ENCODE measurements at regions of chr10 and their contacts with region 1.

Region 1: GRCh38 chr10:86678999-86679792 is 10.9 kb downstream of the LDB3 start:
- DNase-seq: no peak
- ATAC-seq: no peak
- H3K4me3 ChIP-seq: no peak overlapping the region
- H3K4me3 Mint-ChIP-seq: no peak overlapping the region
- H3K27ac ChIP-seq: no peak overlapping the region
- H3K27ac Mint-ChIP-seq: no peak overlapping the region
- H3K4me1 ChIP-seq: no peaks in the 10 kb centered on the region
- H3K4me1 Mint-ChIP-seq: no peaks in the 10 kb centered on the region
- H3K27me3 ChIP-seq: no peaks in the 10 kb centered on the region
- H3K27me3 Mint-ChIP-seq: peaks cover 5% of the 10 kb centered on the region
- CTCF ChIP-seq: no peak

Region 2: DNA sequence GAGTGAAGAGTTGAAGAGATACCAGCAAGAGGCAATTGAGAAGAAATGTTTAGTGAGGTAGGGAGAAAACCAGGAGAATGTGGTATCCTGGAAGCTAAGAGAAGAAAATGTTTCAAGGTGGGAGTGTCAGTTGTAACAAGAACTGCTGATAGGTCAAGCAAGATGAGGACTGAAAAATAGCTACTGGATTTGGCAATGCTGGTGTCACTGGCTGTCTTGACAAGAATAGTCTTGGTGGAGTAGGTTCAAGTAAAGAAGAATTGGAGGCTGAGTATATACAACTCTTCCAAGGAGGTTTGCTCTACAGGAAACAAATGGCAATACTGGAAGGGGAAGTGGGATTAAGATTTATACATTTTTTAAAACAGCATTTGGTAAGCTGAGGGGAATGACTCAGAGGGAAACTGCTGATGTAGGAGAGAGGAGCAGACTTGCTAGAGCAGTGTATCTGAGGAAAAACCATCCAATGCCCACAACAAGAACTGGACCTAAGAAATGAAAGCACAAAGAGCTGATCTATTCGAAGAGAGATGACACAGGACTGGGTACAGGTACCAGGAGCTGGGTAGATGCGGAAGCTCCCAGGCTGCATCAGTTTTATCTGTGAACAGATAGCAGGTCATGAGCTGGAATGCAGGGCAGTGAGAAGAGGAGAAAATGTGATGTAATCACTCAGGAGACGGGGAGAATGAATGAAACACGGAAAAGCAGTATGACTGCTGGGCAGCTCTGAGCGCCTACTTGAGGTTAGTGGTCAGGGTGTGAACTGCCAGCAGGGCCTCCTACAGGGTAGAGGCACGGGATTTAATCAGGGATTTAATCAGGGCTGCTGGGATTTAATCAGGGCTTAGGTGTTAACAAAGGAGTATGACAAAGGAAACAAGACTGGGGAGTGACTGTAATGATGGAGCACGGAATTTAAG is 375.4 kb after region 1 on chr10:
- CTCF ChIA-PET with region 1: no interaction called
- POLR2A ChIA-PET with region 1: no interaction called
- intact Hi-C with region 1: loop called in 1 of 2 experiments (anchors 5 kb)
- DNase-seq: no peak
- ATAC-seq: no peak
- H3K4me3 ChIP-seq: no peak overlapping the region
- H3K4me3 Mint-ChIP-seq: no peak overlapping the region
- H3K27ac ChIP-seq: no peak overlapping the region
- H3K27ac Mint-ChIP-seq: no peak overlapping the region
- H3K4me1 ChIP-seq: no peaks in the 10 kb centered on the region
- H3K4me1 Mint-ChIP-seq: no peaks in the 10 kb centered on the region
- H3K27me3 ChIP-seq: no peaks in the 10 kb centered on the region
- H3K27me3 Mint-ChIP-seq: no peaks in the 10 kb centered on the region
- CTCF ChIP-seq: no peak